Right ventricle myocardium inferior (tissue), 1 donor: ENCODE measurements at regions of chr3 and their contacts with region 1.

Region 1: DNA sequence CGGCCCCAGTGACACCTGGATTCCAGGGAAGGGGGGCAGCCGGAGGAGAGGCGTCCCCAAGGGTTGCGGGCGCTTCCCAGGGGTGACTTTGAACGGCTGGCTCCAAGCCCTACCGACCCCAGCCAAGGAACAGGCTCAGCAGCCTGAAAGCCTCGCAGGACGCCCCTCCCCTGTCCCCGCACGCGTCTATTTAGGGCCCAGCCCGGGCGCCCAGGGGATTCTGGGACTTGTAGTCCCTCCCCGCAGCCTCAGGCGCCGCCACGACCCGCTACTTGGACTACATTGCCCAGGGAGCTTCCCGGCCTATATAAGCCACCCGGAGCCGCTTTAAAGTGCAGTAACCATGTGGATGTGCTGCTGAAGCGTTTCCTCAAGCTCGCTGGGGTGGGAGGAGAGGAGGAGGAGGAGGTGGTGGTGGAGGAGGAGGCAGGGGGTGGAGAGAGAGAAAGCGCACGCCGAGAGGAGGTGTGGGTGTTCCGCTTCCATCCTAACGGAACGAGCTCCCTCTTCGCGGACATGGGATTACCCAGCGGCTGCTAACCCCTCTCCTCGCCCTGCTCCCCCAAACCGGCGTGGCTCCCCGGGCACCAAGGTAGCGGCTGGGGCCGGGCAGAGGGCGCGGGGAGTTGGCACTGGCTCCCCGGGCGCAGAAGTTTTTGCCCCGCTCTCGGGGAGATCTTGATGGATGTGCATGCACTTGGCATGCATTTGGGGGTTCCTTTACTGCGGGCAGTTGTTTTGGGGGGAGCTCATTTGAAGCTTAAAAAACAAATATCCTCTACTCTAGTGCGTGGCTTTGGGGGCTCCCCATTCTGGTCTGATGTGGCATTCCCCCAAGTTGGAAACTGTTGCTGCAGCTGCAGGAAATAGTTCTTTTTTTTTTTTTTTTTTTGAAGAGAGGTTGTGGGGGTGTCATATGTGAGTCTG is at the start of gene ITPR1:
- DNase-seq: peak; percentile 100
- ATAC-seq: peak; percentile 98
- total RNA-seq, gene ITPR1: 22.4 TPM

Region 2: GRCh38 chr3:4350789-4351163 is 142.5 kb before region 1 on chr3:
- intact Hi-C with region 1: loop called (anchors 10 kb)
- DNase-seq: no peak
- ATAC-seq: peak; percentile 84

Region 3: DNA sequence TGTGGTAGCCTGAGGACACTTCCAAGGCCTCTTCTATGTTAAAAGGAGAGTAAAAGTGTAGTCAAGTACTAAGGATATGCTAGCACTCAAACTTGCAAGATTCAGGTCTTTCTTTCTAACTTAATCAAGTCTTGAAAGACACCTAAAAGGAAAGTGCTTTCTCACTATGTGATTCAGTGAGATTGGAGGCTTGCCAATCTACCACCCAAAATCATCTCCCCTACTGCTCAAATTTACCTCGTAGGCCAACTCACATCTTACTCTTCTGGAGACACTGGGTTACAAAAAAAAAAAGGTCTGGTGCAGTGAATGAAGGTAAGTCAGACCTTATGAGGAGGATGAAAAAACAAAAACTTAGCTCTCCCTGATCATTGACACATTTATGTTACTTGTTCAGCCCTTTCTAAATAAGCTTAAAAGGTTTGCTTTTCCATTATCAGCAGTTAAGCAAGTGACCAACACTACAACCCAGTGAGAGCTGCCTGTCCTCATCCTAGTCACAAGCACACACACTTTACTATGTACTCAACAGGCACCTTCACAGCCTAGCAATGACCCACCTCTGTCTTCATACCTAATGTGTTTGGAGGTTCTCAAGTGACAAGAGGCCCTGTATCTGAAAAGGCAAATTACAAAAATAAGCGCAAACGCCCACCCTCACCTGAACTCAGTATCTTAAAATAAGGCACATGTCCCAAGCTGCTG is 45.8 kb before region 1 on chr3:
- intact Hi-C with region 1: no loop called
- DNase-seq: no peak
- ATAC-seq: no peak

Region 4: DNA sequence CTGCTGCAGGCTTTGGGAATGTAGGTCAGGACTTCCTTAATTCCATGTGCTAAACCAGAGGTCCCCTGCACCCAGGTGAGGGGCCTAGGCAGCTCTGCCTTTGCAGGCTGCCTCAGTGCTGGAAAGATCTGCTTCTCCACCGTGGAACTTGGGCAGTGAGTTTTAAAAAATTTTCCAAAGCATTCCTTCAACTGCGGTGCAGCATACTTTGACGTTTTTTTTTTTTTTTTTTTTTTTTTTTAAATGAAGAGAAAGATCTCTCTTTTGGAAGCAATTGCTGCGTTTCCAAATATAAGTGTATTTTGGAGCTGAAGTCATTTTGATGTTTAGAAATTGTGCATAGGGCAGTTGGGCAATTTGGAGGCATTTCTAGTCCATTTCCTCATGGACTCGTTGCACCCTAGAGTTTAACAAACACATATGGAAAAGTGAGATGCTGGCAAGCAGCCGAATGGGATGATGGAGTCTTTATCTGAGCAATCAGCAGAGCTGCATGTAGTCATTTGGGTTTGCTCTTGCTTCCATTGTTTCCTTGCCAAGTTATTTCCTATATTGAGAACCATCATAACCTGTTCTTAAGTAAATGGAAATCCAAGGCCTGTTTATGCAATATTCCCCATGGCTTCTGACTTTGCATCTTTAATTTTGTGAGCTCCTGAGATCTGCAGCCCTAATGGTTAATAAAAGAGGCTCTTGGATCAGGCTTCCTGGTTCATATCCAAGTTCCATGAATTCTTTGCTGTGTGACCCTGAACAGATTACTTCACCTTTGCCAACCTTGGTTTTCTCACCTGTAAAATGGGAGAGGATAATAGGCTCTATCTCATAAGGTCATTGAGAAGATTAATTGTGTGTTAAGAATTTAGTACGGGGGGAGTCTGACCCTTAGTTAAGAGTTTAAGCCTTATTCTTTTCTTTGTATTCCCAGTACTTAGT is 31.1 kb after region 1 on chr3:
- intact Hi-C with region 1: loop called (anchors 5 kb)
- DNase-seq: no peak
- ATAC-seq: no peak

Region 5: GRCh38 chr3:4584456-4585249 is 91.4 kb after region 1 on chr3:
- intact Hi-C with region 1: loop called (anchors 2 kb)
- DNase-seq: no peak
- ATAC-seq: peak; percentile 12

Region 6: DNA sequence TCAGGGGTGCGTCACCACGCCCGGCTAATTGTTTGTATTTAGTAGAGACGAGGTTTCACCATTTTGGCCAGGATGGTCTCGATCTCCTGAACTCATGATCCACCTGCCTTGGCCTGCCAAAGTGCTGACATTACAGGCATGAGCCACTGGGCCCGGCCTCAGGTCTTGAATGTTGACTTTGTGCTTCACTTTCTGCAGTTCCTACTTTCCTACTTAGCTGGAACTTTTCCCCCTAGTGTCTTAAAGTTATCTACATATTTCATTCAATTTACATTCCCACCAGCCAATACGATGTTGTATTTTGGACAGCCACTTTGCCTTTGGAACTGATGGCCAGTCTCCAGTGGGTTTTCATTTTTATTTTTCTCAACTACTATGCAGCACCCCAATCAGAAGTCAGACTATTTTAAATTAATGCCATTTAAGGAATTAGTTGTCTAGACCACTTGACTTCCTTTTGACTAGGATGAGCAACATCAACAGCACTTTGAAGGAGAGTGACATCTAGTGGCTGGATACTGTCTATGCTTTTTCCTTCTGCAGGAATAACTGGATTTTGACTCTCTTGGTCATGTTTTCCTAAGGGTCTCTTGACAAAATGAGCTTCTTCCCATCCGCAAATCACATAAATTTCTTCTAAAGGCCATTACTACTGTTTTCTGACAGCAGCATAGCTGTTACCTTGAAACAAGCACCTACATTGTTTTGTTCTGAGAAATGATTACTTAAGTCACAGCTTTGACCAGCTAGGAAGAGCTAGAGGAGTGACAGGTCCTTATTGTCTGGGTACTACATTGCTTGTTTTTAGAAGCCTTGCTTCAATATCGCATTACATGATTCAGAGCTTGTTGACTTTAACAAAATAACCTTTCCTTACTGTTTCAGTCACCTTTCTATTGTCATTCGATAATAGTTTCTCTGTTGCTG is 140.1 kb after region 1 on chr3:
- intact Hi-C with region 1: loop called (anchors 1 kb)
- DNase-seq: no peak
- ATAC-seq: peak; percentile 61